ENCODE measurements at regions of chr12 and their contacts with region 1.

Region 1: DNA sequence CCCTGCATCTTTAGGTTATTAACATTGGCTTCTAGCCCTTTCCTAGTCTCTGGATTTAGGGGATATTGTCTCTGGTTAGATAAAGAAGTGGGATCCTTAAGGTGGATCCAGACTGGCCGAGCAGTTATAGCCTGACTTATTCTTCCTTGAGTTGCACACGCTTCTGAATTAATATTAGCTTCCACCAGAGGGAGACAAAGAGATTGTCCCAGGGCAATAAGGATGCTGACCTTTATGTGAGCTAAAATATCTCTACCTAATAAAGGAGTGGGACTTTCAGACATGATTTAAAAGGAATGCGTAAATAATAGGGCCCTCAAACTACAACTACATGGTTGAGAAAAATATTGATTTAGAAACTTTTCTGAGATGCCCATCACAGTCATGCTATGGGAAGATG is 139.7 kb downstream of the SLCO1B3 start:
- DNase-seq: no peak
- ATAC-seq: peak; percentile 75
- H3K4me3 Mint-ChIP-seq: no peak overlapping the region
- H3K27ac Mint-ChIP-seq: no peak overlapping the region
- H3K4me1 Mint-ChIP-seq: 0 out of 2 replicates have a peak, but pooled peaks cover under 1% of the 10 kb centered on the region
- H3K27me3 Mint-ChIP-seq: no peaks in the 10 kb centered on the region
- CTCF ChIP-seq: 0 out of 2 replicates have a peak, but pooled peaks have one; percentile 24

Region 2: GRCh38 chr12:20883288-20883687 is 67.0 kb before region 1 on chr12:
- CTCF ChIA-PET with region 1: no interaction called
- POLR2A ChIA-PET with region 1: no interaction called
- DNase-seq: no peak
- ATAC-seq: no peak
- H3K4me3 Mint-ChIP-seq: no peak overlapping the region
- H3K27ac Mint-ChIP-seq: no peak overlapping the region
- H3K4me1 Mint-ChIP-seq: no peaks in the 10 kb centered on the region
- H3K27me3 Mint-ChIP-seq: no peaks in the 10 kb centered on the region
- CTCF ChIP-seq: no peak

Region 3: DNA sequence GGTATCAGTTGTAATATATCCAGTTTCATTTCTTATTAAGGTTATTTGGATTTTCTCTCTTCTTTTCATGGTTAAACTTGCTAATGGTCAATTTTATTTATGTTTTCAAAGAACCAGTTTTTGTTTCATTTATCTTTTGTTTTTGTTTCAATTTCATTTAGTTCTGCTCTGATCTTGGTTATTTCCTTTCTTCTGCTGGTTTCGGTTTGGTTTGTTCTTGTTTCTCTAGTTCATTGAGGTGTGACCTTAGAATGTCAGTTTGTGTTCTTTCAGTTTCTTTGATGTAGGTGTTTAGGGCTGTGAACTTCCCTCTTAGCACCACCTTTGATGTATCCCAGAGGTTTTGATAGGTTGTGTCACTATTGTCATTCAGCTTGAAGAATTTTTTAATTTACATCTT is 35.2 kb after region 1 on chr12:
- CTCF ChIA-PET with region 1: no interaction called
- POLR2A ChIA-PET with region 1: no interaction called
- DNase-seq: no peak
- ATAC-seq: no peak
- H3K4me3 Mint-ChIP-seq: no peak overlapping the region
- H3K27ac Mint-ChIP-seq: no peak overlapping the region
- H3K4me1 Mint-ChIP-seq: no peaks in the 10 kb centered on the region
- H3K27me3 Mint-ChIP-seq: no peaks in the 10 kb centered on the region
- CTCF ChIP-seq: no peak

Region 4: DNA sequence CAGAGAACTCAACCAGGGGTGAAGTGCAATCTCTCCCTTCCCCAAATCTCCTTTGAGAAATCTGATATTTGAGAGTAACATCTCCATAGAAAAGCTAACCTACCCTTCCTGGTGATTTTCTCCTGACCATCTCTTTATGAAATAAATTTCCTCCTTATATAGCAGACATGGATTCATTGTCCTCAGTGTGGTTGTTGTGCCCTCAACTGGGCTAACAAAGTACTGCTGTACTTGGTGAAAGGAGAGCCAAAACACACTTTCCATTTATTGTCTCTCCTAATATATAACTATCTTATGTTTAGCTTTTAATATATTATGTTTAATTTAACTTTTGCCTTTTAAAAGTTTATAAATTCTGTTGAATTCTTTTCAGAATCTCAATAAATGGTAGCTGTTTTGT is 115.6 kb after region 1 on chr12:
- CTCF ChIA-PET with region 1: interaction called, 10 read pairs
- POLR2A ChIA-PET with region 1: no interaction called
- DNase-seq: peak; percentile 12
- ATAC-seq: peak; percentile 78
- H3K4me3 Mint-ChIP-seq: no peak overlapping the region
- H3K27ac Mint-ChIP-seq: no peak overlapping the region
- H3K4me1 Mint-ChIP-seq: no peaks in the 10 kb centered on the region
- H3K27me3 Mint-ChIP-seq: no peaks in the 10 kb centered on the region
- CTCF ChIP-seq: no peak

Region 5: GRCh38 chr12:21172079-21172478 is 221.8 kb after region 1 on chr12:
- CTCF ChIA-PET with region 1: interaction called, 11 read pairs
- POLR2A ChIA-PET with region 1: no interaction called
- DNase-seq: no peak
- ATAC-seq: peak; percentile 57; the same call in 1 of the 2 replicates
- H3K4me3 Mint-ChIP-seq: no peak overlapping the region
- H3K27ac Mint-ChIP-seq: no peak overlapping the region
- H3K4me1 Mint-ChIP-seq: peaks cover 21% of the 10 kb centered on the region
- H3K27me3 Mint-ChIP-seq: no peaks in the 10 kb centered on the region
- CTCF ChIP-seq: no peak